Dorsolateral prefrontal cortex (tissue), 120 donors: ENCODE measurements at regions of chr16 and their contacts with region 1.

Region 1: DNA sequence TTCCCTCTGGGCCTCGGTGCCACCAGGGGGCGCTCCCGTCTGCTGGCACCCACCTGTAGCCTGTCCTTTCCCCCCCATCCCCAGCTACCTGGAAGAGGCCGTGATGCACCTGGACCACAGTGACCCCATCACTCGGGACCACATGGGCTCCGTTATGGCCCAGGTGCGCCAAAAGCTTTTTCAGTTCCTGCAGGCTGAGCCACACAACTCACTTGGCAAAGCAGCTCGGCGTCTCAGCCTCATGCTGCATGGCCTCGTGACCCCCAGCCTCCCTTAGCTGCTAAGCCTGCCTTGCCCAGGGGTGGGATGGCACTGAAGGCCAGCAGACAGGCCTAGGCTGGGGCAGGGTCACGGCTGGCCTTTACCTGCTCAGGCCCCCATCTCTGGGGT is 818 bp upstream of the NRN1L start:
- DNase-seq: peak in 9 of 10 donors; percentile 43 to 71 (median 53)
- H3K4me3 ChIP-seq: peak overlapping the region in 3 of 59 donors; percentile 4 to 55 (median 53)
- H3K27ac ChIP-seq: peak overlapping the region; percentile 9 to 98 (median 92)
- H3K27me3 ChIP-seq: no peaks in the 10 kb centered on the region
- CTCF ChIP-seq: peak; percentile 5 to 93 (median 82)

Region 2: GRCh38 chr16:67841764-67842508 is 41.9 kb before region 1 on chr16 and contains the start of gene THAP11:
- intact Hi-C with region 1: loop called in 1 of 2 experiments (anchors 5 kb)
- DNase-seq: peak; percentile 88 to 95 (median 91)
- H3K4me3 ChIP-seq: peak within 1 kb of the TSS; percentile 73 to 100 (median 94)
- H3K27ac ChIP-seq: peak within 1 kb of the TSS; percentile 97 to 100 (median 100)
- H3K27me3 ChIP-seq: no peaks in the 10 kb centered on the region
- CTCF ChIP-seq: peak; percentile 77 to 98 (median 94)
- total RNA-seq, gene THAP11: 17.7 to 30.0 (median 24.0) TPM

Region 3: DNA sequence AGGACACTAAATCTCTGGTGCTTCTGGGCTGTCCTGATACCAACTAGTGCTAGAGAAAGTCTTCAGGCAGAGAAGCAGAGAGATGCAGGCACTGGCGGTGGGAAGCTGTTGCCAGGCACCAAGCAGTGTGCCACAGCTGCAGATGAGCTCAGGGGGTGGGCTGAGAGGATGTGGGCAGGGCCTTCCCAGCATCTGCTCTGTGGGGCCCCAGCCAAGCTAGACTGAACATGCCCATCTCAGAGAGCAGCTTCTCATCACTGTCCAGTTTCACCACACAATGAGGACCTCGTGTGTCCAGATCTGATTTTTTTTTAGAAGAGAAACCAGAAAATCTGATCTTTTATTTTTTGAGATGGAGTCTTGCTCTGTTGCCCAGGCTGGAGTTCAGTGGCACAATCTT is 26.3 kb after region 1 on chr16:
- intact Hi-C with region 1: loop called in 1 of 2 experiments (anchors 1 kb)
- DNase-seq: peak in 9 of 10 donors; percentile 77 to 94 (median 92)
- H3K4me3 ChIP-seq: peak overlapping the region in 3 of 59 donors; percentile 4 to 34 (median 29)
- H3K27ac ChIP-seq: peak overlapping the region in 58 of 59 donors; percentile 11 to 93 (median 80)
- H3K27me3 ChIP-seq: no peaks in the 10 kb centered on the region
- CTCF ChIP-seq: peak in 42 of 56 donors; percentile 7 to 65 (median 36)

Region 4: GRCh38 chr16:67968400-67969253 is 84.8 kb after region 1 on chr16 and contains the start of gene SLC12A4:
- intact Hi-C with region 1: no loop called
- DNase-seq: peak in 6 of 10 donors; percentile 28 to 80 (median 46)
- H3K4me3 ChIP-seq: peak within 1 kb of the TSS; percentile 53 to 88 (median 72)
- H3K27ac ChIP-seq: peak within 1 kb of the TSS in 53 of 59 donors; percentile 6 to 89 (median 71)
- H3K27me3 ChIP-seq: peaks cover 0 to 19% (median 0%) of the 10 kb centered on the region in 45 donors
- CTCF ChIP-seq: peak in 4 of 56 donors; percentile 5 to 17 (median 7)
- total RNA-seq, gene SLC12A4: 12.2 to 79.2 (median 26.9) TPM

Region 5: GRCh38 chr16:68093816-68094613 is 210.1 kb after region 1 on chr16:
- intact Hi-C with region 1: no loop called
- DNase-seq: no peak
- H3K4me3 ChIP-seq: no peak overlapping the region
- H3K27ac ChIP-seq: peak overlapping the region in 24 of 59 donors; percentile 3 to 64 (median 32)
- H3K27me3 ChIP-seq: no peaks in the 10 kb centered on the region
- CTCF ChIP-seq: peak in 54 of 56 donors; percentile 24 to 67 (median 47)